ENCODE measurements at regions of chr4 and their contacts with region 1.

Region 1: DNA sequence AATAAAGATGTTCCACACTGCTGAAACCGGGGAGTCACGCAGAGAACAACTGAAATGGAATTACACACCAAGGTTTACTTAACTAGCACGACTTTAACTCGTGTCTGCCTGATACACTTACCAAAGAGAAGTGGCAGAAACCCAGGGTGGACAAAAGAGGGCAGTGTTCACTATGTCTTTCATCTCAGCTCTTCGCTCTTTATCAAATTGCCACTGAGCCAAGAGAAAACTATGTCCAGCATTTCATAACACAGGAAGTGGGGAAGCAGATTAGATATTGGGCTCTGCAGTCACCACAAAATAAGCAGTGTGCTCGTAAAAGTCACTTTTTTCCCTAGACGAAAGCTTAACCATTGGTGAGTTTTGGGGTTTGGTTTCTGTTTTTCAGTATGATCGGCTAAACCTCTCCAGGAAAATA is 155.7 kb downstream of the CHIC2 start:
- H3K4me3 ChIP-seq: no peak overlapping the region
- H3K27ac ChIP-seq: no peak overlapping the region
- H3K4me1 ChIP-seq: no peaks in the 10 kb centered on the region
- CTCF ChIP-seq: peak; percentile 14; the same call in 1 of the 2 replicates

Region 2: GRCh38 chr4:53015681-53016080 is 893.0 kb before region 1 on chr4:
- CTCF ChIA-PET with region 1: interaction called, 18 read pairs
- POLR2A ChIA-PET with region 1: no interaction called
- H3K4me3 ChIP-seq: no peak overlapping the region
- H3K27ac ChIP-seq: no peak overlapping the region
- H3K4me1 ChIP-seq: 0 out of 2 replicates have a peak, but pooled peaks cover 3% of the 10 kb centered on the region
- CTCF ChIP-seq: peak; percentile 37; the same call in 1 of the 2 replicates

Region 3: DNA sequence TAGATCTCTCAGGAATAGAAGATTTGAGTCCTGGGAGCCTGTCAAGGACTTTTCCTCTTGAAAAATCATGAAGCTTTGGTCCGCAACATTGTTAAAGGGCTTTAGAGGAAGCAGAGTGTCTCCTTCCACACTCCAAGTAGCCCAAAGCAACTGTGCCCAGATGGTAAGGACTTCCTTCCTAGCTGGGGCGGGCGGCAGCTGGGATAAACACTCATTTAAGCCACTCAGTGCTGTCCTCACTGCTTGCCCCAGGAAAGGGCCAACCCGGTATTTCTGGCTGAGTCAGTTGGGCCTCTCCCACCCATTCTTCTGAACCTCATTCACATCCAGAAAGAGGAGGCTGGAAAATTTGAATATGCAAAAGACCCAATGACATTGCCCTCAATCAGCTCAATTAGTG is 11.4 kb after region 1 on chr4:
- CTCF ChIA-PET with region 1: interaction called, 20 read pairs
- POLR2A ChIA-PET with region 1: no interaction called
- H3K4me3 ChIP-seq: no peak overlapping the region
- H3K27ac ChIP-seq: no peak overlapping the region
- H3K4me1 ChIP-seq: peaks cover 3% of the 10 kb centered on the region; the same call in 1 of the 2 replicates
- CTCF ChIP-seq: no peak

Region 4: GRCh38 chr4:53929955-53930798 is 21.5 kb after region 1 on chr4:
- CTCF ChIA-PET with region 1: interaction called, 16 read pairs
- POLR2A ChIA-PET with region 1: interaction called, 3 read pairs
- H3K4me3 ChIP-seq: no peak overlapping the region
- H3K27ac ChIP-seq: no peak overlapping the region
- H3K4me1 ChIP-seq: no peaks in the 10 kb centered on the region; the same call in 1 of the 2 replicates
- CTCF ChIP-seq: peak; percentile 58

Region 5: GRCh38 chr4:54015423-54016030 is 106.9 kb after region 1 on chr4:
- CTCF ChIA-PET with region 1: no interaction called
- POLR2A ChIA-PET with region 1: no interaction called
- H3K4me3 ChIP-seq: no peak overlapping the region
- H3K27ac ChIP-seq: no peak overlapping the region
- H3K4me1 ChIP-seq: no peaks in the 10 kb centered on the region
- CTCF ChIP-seq: no peak

Region 6: DNA sequence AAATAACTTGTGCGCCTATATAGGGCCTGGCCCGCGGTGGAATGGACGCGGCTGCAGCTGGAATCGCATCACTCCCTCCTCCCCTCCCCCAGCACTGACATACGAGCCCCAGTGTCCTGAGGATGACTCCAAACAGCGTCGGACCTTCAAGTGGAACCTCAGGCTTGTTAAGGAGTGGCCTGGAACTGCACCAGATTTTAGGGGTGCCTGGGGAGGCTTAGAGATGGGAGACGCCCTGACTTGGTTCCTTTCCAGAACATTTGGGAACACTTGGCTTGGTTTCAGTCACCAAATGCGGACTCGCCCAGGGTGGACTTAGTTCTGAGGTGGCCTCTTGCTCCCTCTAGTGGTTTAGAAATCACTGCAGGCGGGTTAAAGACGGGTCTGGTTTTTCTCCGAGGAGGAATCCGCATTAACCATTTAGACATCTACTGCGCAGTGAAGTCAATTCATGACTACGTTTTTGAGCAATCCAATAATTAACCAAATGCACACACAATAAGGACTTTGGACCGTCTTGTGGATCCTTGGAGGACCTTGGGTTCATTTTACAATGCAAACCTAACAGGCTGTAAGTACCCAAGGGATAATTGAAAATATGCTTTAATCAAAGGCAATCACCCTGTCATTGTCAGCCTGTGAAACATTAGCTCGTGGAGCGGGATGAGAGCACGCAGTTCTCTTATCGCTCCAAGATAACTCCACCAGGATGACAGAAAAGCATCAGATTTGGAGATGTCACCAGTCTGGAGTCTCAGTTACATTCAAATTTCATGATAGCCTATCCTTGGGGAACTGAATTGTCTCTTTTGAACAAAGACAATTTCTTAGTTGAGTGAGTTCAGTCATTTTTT is 309.2 kb after region 1 on chr4:
- CTCF ChIA-PET with region 1: interaction called, 45 read pairs
- POLR2A ChIA-PET with region 1: no interaction called
- H3K4me3 ChIP-seq: peak overlapping the region; percentile 45
- H3K27ac ChIP-seq: peak overlapping the region; percentile 46; the same call in 1 of the 2 replicates
- H3K4me1 ChIP-seq: no peaks in the 10 kb centered on the region
- CTCF ChIP-seq: peak; percentile 61

Region 7: DNA sequence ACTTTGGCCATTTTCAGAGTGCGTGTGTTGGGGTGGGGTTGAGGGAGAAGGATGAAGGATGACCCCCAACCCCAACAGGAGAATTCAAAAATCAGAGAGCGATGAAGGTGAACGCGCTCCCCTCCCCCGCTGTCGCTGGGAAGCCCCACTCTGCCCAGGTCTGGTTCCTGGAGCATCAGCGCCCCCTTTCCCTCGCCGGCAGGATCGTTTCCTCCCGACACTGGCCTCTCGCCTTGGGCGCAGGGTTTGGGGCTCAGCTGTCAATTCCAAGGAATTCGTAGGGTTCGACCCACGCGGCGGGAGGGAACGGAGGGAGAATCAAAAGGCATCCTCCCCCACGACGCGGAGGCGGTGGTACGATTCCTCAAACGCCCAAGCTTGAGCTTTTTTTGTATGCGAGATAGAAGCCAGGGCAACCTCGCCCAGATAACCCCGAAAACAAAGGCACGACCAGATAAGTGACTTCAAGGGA is 319.4 kb after region 1 on chr4:
- CTCF ChIA-PET with region 1: interaction called, 44 read pairs
- POLR2A ChIA-PET with region 1: interaction called, 4 read pairs
- H3K4me3 ChIP-seq: peak overlapping the region; percentile 52
- H3K27ac ChIP-seq: peak overlapping the region; percentile 62; the same call in 1 of the 2 replicates
- H3K4me1 ChIP-seq: no peaks in the 10 kb centered on the region
- CTCF ChIP-seq: peak; percentile 86

Region 8: DNA sequence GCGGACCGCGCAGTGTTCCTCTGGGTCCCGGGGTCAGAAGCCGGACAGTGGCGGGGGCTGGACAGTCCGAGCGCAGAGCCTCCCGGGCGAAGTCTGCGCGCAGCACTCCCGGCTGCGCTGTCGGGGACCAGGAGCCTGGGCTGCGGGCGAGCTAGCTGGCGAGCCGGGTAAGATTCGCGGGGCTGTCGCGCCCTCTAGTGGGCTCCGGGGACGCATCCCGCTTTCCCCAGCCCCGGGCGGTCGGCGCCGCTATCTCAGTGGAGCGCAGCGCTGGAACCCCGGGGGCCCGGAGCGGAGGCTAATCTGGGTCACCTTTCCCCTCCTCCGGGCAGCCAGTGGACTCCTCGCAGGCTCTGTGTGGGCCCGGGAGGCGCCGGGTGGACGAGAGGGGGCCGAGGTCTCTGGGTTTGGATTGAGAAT is 324.6 kb after region 1 on chr4:
- CTCF ChIA-PET with region 1: interaction called, 44 read pairs
- POLR2A ChIA-PET with region 1: interaction called, 4 read pairs
- H3K4me3 ChIP-seq: peak overlapping the region; percentile 56
- H3K27ac ChIP-seq: peak overlapping the region; percentile 82; the same call in 1 of the 2 replicates
- H3K4me1 ChIP-seq: 0 out of 2 replicates have a peak, but pooled peaks cover 2% of the 10 kb centered on the region
- CTCF ChIP-seq: peak; percentile 83